ENCODE measurements at regions of chr1 and their contacts with region 1.

Region 1: GRCh38 chr1:148334339-148335130 is 148.6 kb downstream of the PPIAL4G start:
- DNase-seq: peak; percentile 73
- ATAC-seq: peak; percentile 82
- H3K4me3 Mint-ChIP-seq: peak overlapping the region; percentile 98
- H3K27ac Mint-ChIP-seq: peak overlapping the region; percentile 100
- H3K4me1 Mint-ChIP-seq: peaks cover 33% of the 10 kb centered on the region
- H3K27me3 Mint-ChIP-seq: peaks cover 10% of the 10 kb centered on the region
- CTCF ChIP-seq: no peak

Region 2: GRCh38 chr1:148161053-148161901 is 173.3 kb before region 1 on chr1:
- CTCF ChIA-PET with region 1: no interaction called
- POLR2A ChIA-PET with region 1: no interaction called
- intact Hi-C with region 1: no loop called
- DNase-seq: no peak
- ATAC-seq: no peak
- H3K4me3 Mint-ChIP-seq: no peak overlapping the region
- H3K27ac Mint-ChIP-seq: no peak overlapping the region
- H3K4me1 Mint-ChIP-seq: peaks cover 9% of the 10 kb centered on the region
- H3K27me3 Mint-ChIP-seq: peaks cover 11% of the 10 kb centered on the region
- CTCF ChIP-seq: no peak

Region 3: GRCh38 chr1:148263128-148263905 is 71.2 kb before region 1 on chr1:
- CTCF ChIA-PET with region 1: interaction called, 6 read pairs
- POLR2A ChIA-PET with region 1: interaction called, 250 read pairs
- intact Hi-C with region 1: loop called (anchors 1 kb)
- DNase-seq: peak; percentile 58
- ATAC-seq: peak; percentile 89
- H3K4me3 Mint-ChIP-seq: peak overlapping the region; percentile 93
- H3K27ac Mint-ChIP-seq: peak overlapping the region; percentile 98
- H3K4me1 Mint-ChIP-seq: peaks cover 14% of the 10 kb centered on the region
- H3K27me3 Mint-ChIP-seq: no peaks in the 10 kb centered on the region
- CTCF ChIP-seq: no peak

Region 4: GRCh38 chr1:148272901-148273300 is 61.6 kb before region 1 on chr1:
- CTCF ChIA-PET with region 1: no interaction called
- POLR2A ChIA-PET with region 1: interaction called, 10 read pairs
- intact Hi-C with region 1: no loop called
- DNase-seq: no peak
- ATAC-seq: no peak
- H3K4me3 Mint-ChIP-seq: no peak overlapping the region
- H3K27ac Mint-ChIP-seq: no peak overlapping the region
- H3K4me1 Mint-ChIP-seq: no peaks in the 10 kb centered on the region
- H3K27me3 Mint-ChIP-seq: peaks cover 21% of the 10 kb centered on the region
- CTCF ChIP-seq: no peak

Region 5: DNA sequence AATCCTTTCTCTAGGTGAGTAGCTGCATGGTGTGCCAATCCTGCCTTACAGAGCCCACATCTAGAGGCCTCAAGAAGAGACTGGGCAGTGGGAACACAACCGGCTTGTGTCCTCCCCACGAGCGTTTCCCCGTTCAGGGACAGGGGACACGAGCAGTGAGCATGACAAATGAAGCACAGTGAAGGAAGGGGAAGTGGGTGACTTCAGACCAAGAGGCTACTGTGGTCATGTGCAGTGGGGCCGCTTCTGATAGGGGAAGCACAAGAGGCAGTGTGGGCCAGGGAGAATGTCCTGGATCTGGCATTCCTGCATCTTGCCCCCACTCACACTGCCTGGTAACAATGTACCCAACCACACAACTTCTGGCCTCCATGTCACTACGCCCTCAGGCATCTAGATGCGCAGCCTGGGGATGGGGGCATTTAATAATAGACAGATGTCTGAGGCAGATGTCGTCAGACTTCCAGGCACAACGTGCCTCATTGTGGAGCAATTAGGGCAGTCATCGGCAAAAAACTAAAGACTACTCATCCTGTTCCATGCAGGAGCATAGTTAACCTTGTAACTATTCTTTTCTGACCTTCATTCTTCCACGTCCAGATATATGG is 26.8 kb before region 1 on chr1:
- CTCF ChIA-PET with region 1: no interaction called
- POLR2A ChIA-PET with region 1: interaction called, 44 read pairs
- intact Hi-C with region 1: no loop called
- DNase-seq: no peak
- ATAC-seq: no peak
- H3K4me3 Mint-ChIP-seq: no peak overlapping the region
- H3K27ac Mint-ChIP-seq: no peak overlapping the region
- H3K4me1 Mint-ChIP-seq: peaks cover 31% of the 10 kb centered on the region
- H3K27me3 Mint-ChIP-seq: peaks cover 14% of the 10 kb centered on the region
- CTCF ChIP-seq: no peak

Region 6: GRCh38 chr1:148318123-148318903 is 16.2 kb before region 1 on chr1:
- CTCF ChIA-PET with region 1: interaction called, 3 read pairs
- POLR2A ChIA-PET with region 1: interaction called, 62 read pairs
- intact Hi-C with region 1: loop called (anchors 1 kb)
- DNase-seq: peak; percentile 45
- ATAC-seq: peak; percentile 77
- H3K4me3 Mint-ChIP-seq: peak overlapping the region; percentile 96
- H3K27ac Mint-ChIP-seq: peak overlapping the region; percentile 92
- H3K4me1 Mint-ChIP-seq: peaks cover 35% of the 10 kb centered on the region
- H3K27me3 Mint-ChIP-seq: no peaks in the 10 kb centered on the region
- CTCF ChIP-seq: no peak

Region 7: GRCh38 chr1:148388260-148389027 is 53.9 kb after region 1 on chr1:
- CTCF ChIA-PET with region 1: no interaction called
- POLR2A ChIA-PET with region 1: interaction called, 60 read pairs
- intact Hi-C with region 1: loop called (anchors 5 kb)
- DNase-seq: peak; percentile 70
- ATAC-seq: peak; percentile 76
- H3K4me3 Mint-ChIP-seq: peak overlapping the region; percentile 95
- H3K27ac Mint-ChIP-seq: peak overlapping the region; percentile 100
- H3K4me1 Mint-ChIP-seq: peaks cover 45% of the 10 kb centered on the region
- H3K27me3 Mint-ChIP-seq: no peaks in the 10 kb centered on the region
- CTCF ChIP-seq: no peak

Measured in activated B cell treated with CpG ODN at 0.5 μM for 24 hours (primary cell).